Activated naive CD4-positive, alpha-beta T cell treated with anti-CD3 and anti-CD28 coated beads, Interleukin-2, amount 10 ng/mL, durations not matched to agents 7 days and 5 days (primary cell): ENCODE measurements at regions of chr11 and their contacts with region 1.

Region 1: GRCh38 chr11:14300661-14301304 is 58.2 kb downstream of the RRAS2 start:
- DNase-seq: peak; percentile 66
- H3K4me3 Mint-ChIP-seq: no peak overlapping the region
- H3K27ac Mint-ChIP-seq: no peak overlapping the region
- H3K4me1 Mint-ChIP-seq: peaks cover 16% of the 10 kb centered on the region
- H3K27me3 Mint-ChIP-seq: no peaks in the 10 kb centered on the region

Region 2: DNA sequence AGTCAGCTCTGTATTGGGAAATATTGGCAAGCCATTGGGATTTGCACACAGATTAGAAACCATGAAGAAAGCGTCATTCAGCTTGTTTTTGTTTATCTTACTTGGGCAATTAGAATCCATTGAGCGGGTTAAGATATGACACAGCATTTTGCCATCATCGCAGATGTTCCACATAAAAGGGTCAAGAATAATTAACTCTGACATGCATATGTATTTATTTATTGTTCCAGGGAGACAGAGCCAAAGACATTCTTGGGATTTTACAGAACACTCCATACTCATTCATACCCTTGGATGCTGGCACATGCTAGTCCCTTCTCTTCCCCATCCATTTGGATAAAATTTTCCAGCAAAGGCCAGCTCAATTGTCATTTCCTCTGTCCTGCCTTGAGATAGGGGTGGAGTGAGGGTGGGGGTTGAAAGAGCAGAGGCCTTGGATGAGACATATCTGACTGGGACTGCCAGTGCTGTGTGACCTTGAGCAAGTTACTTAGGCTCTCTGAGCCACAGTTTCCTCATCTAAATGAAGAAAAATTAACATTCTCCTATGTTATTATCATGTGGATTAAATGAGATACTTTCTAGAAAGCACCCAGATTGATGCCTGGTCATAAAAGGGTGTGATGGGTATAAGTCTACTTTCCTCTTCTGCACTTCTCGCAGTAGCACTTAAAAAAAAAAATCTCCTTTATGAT is 121.5 kb before region 1 on chr11:
- CTCF ChIA-PET with region 1: no interaction called
- DNase-seq: no peak
- H3K4me3 Mint-ChIP-seq: no peak overlapping the region
- H3K27ac Mint-ChIP-seq: no peak overlapping the region
- H3K4me1 Mint-ChIP-seq: peaks cover 26% of the 10 kb centered on the region
- H3K27me3 Mint-ChIP-seq: peaks cover 5% of the 10 kb centered on the region

Region 3: DNA sequence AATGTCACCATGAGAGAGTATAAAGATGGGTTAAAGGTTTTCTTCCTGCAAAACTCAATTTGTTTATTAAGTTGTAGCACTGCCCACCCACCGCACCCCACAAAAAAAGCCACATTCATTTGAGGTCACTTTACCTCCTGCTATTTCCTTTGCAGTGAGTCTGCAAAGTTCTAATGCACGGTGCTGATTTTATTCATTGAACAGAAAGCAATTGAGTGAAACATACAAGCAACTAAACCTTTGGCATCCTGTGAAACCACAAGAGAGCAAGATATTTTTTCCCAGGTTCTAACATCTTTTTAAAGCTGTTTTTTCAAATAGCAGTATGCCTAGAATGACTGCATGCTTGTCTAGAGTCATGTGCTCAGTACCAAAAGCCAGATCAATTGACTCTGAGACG is 19.2 kb after region 1 on chr11:
- CTCF ChIA-PET with region 1: no interaction called
- DNase-seq: peak; percentile 79
- H3K4me3 Mint-ChIP-seq: peak overlapping the region; percentile 17
- H3K27ac Mint-ChIP-seq: peak overlapping the region; percentile 84
- H3K4me1 Mint-ChIP-seq: peaks cover 72% of the 10 kb centered on the region
- H3K27me3 Mint-ChIP-seq: no peaks in the 10 kb centered on the region

Region 4: DNA sequence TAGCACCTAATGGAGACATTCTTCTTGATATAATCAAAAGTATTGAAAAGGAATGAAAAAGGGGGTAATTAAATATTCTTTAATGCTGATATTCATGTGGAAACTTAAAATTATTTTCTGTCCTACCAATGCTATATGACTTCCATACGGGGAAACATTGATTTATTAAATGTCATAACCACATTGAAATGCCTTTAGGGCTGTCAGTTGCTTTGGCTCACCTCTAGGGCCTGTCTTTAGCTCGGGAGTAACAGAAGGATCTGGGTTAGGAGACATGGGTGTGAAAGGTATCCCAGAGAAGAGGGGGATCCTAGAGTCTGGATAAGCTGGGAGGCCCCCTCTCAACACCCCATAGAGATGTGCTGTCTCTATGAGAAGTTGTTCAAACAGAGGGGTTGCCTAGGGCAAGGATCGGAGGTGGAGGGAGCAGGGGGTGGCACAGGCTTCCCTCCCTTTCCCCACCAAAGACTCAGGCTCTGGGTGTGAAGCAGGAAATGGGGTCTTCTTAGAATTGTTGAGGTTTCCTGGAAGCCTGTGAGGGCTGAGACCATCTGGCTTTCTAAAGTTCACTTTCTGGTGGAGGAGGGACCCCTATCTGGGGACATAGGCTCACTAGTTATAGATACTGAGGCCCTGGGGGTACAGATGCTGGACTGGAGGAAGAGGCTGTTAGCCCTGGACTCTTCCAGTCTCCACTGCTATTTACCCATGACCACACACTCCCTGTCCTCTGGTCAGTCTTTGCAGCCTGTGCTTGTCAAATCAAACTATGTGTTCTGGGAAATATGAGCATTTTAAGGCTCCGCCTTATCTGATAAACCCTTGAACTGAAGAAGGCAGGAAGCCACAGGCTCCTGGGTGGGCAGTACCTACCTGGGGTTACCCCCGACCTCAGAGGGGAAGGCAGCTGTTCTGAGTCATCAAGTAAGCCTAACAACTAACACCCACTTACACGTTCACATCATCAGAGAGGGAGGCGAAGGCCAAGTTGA is 114.0 kb after region 1 on chr11:
- CTCF ChIA-PET with region 1: interaction called, 70 read pairs
- DNase-seq: peak; percentile 84
- H3K4me3 Mint-ChIP-seq: peak overlapping the region; percentile 65
- H3K27ac Mint-ChIP-seq: peak overlapping the region; percentile 84
- H3K4me1 Mint-ChIP-seq: peaks cover 78% of the 10 kb centered on the region
- H3K27me3 Mint-ChIP-seq: no peaks in the 10 kb centered on the region

Region 5: DNA sequence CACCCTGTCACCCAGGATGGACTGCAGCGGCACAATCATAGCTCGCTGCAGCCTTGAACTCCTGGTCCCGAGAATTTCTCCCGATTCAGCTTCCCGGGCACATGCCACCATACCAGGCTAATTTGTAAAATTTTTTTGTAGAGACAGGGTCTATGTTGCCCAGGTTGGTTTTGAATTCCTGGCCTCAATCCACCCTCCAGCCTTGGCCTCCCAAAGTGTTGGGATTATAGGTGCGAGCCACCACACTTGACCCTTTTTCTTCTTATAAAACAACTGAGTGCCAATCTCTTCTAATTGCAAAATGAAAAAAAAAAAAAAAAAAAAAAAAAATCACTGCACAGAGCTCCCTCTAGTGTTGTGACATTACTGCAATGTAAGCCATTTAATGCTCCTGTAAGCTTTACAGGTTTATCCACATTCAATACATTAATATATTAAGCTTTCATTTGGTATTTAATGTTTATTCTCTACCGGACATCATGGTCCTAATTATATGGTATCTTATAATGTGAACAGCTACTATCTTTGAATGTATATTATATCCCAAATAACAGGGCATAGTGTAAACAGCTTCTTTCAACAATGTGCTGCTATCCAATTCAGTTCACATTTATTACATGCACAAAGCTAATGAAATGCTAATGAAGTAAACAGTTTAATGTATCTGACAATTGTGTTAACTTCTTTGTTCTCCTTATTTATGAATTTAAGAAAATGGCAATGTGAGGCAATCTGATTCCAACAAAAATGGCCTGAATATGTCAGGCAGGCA is 154.3 kb after region 1 on chr11:
- CTCF ChIA-PET with region 1: interaction called, 109 read pairs
- DNase-seq: no peak
- H3K4me3 Mint-ChIP-seq: no peak overlapping the region
- H3K27ac Mint-ChIP-seq: no peak overlapping the region
- H3K4me1 Mint-ChIP-seq: peaks cover 2% of the 10 kb centered on the region
- H3K27me3 Mint-ChIP-seq: no peaks in the 10 kb centered on the region